ENCODE measurements at regions of chr6 and their contacts with region 1.

Region 1: DNA sequence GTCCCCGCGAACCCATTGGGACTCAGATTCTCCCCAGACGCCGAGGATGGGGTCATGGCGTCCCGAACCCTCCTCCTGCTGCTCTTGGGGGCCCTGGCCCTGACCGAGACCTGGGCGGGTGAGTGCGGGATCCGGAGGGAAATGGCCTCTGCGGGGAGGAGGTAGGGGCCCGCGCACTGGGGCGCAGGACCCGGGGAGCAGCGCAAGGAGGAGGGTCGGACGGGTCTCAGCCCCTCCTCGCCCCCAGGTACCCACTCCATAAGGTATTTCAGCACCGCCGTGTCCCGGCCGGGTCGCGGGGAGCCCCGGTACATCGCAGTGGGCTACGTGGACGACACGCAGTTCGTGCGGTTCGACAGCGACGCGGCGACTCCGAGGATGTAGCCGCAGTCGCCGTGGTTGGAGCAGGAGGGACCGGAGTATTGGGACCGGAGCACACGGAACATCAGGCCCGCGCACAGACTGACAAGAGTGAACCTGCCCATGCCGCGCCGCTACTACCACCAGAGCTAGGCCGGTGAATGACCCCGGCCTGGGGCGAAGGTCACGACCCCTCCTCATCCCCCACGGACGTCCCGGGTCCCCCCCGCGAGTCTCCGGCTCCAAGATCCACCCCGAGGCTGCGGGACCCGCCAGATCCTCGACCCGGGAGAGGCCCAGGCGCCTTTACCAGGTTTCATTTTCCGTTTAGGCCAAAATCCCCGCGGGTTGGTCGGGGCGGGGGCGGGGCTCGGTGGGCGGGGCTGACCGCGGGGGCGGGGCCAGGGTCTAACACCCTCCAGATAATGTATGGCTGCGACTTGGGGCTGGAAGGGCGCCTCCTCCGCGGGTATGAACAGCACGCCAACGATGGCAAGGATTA is 15.7 kb upstream of the HLA-A start:
- DNase-seq: peak; percentile 80
- H3K4me3 Mint-ChIP-seq: peak overlapping the region; percentile 88
- H3K27ac Mint-ChIP-seq: peak overlapping the region; percentile 91
- H3K4me1 Mint-ChIP-seq: peaks cover 27% of the 10 kb centered on the region
- H3K27me3 Mint-ChIP-seq: no peaks in the 10 kb centered on the region

Region 2: DNA sequence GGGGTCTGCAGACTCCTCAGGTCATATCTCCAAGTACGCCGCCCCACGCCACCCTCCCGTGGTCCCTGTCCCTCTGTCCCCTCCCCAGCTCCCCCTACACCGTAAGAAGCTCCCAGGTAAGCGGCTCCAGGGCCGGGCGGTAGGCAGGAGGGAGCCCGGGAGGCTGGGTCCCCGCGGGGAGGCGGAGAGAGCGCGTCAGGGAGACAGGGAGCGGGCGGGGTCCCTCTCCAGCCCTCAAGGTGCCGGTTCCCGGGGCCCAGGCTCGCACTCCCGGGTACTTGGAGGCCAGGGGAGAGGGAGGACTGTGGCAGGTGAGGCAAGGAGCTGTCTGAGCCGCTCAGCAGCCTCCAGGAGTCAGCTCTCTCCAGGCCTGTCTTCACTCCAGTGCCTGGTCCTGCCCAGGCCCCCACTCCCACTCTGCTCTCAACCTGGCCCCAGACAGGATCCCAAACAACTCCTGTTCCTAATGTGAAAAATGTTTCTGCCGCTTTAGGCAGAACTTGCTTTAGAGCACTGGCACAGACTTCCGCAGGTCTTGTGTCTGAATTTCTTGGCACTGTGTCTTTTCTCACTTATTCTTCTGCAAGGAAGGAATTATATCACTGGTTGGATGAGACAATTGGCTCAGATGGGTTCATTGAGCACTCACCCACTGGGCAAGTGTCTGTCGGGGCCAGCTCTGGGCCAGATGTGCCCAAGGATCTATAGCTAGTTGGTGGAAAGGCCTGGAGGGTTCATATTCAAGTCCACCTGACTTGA is 62.4 kb before region 1 on chr6:
- intact Hi-C with region 1: loop called (anchors 10 kb)
- DNase-seq: no peak
- H3K4me3 Mint-ChIP-seq: no peak overlapping the region
- H3K27ac Mint-ChIP-seq: no peak overlapping the region
- H3K4me1 Mint-ChIP-seq: no peaks in the 10 kb centered on the region
- H3K27me3 Mint-ChIP-seq: peaks cover 56% of the 10 kb centered on the region

Region 3: GRCh38 chr6:29942275-29943052 is 15.8 kb after region 1 on chr6 and contains the start of gene HLA-A:
- intact Hi-C with region 1: loop called (anchors 2 kb)
- DNase-seq: peak; percentile 85
- H3K4me3 Mint-ChIP-seq: peak within 1 kb of the TSS; percentile 95
- H3K27ac Mint-ChIP-seq: peak within 1 kb of the TSS; percentile 99
- H3K4me1 Mint-ChIP-seq: peaks cover 39% of the 10 kb centered on the region
- H3K27me3 Mint-ChIP-seq: no peaks in the 10 kb centered on the region
- total RNA-seq, gene HLA-A: 1,569 and 1,592 TPM in 2 replicates

Region 4: DNA sequence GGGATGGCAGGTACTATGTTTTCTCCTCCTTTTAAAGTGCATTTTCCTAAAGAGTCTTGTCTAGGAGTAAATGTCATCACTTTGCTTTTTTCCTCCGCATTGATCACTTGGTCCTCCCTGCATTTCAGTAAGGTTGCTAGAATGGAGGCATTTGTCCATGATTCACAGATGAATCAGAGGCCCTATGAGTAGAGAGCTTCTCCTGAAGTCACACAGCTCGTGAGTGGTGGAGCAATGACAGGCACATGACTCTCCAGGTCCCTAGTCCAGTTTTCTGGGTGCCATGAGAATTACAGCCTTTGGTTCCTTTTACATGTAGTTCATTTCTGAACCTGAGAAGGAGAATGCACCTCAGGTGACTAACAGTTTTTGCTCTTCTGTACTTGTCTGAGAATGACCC is 66.2 kb after region 1 on chr6:
- intact Hi-C with region 1: no loop called
- DNase-seq: no peak
- H3K4me3 Mint-ChIP-seq: no peak overlapping the region
- H3K27ac Mint-ChIP-seq: no peak overlapping the region
- H3K4me1 Mint-ChIP-seq: peaks cover 6% of the 10 kb centered on the region
- H3K27me3 Mint-ChIP-seq: peaks cover 36% of the 10 kb centered on the region

Measured in activated T-helper 2 cell treated with anti-CD3 and anti-CD28 coated beads, Interferon-gamma antibody, Interleukin-2, Interleukin-4, amounts not matched to agents 10 μg/mL and 5 μg/mL and 100 μg/mL, durations not matched to agents 14 hours and 24 hours and 36 hours (primary cell).